ENCODE measurements at regions of chr15 and their contacts with region 1.

Region 1: GRCh38 chr15:59587068-59587826 is 24.3 kb upstream of the GCNT3 start:
- DNase-seq: peak; percentile 81
- ATAC-seq: peak; percentile 88
- H3K4me3 ChIP-seq: no peak overlapping the region
- H3K27ac ChIP-seq: peak overlapping the region; percentile 63
- H3K4me1 ChIP-seq: peaks cover 12 to 24% of the 10 kb centered on the region in 2 experiments
- H3K27me3 ChIP-seq: no peaks in the 10 kb centered on the region
- CTCF ChIP-seq: no peak
- POLR2A ChIP-seq: no peak
- RAD21 ChIP-seq: peak; percentile 9; the same call in 1 of the 2 replicates

Region 2: DNA sequence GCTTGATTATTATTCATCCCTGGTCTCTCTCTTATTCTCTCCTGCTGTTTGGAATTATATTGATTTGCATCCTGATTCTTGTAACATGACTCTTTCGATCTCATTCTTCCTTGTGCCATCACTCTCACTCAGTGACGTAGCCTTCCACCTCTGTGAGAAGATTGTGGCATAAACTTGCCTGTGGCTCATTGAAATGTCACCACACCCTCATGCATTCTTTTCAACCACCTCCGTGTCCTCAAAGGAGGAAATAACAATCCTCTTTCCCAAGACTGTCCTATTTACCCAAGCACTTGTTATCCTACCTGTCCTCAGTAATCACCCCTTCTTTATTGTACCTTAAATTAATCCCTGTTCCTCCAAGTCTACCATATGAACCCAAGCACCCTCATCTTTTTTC is 16.9 kb before region 1 on chr15:
- CTCF ChIA-PET with region 1: no interaction called
- POLR2A ChIA-PET with region 1: no interaction called
- RAD21 ChIA-PET with region 1: interaction called in 1 of 2 experiments, 4 read pairs
- intact Hi-C with region 1: loop called (anchors 1 kb)
- DNase-seq: peak; percentile 45
- ATAC-seq: no peak
- H3K4me3 ChIP-seq: no peak overlapping the region
- H3K27ac ChIP-seq: no peak overlapping the region
- H3K4me1 ChIP-seq: peaks cover 5 to 9% of the 10 kb centered on the region in 2 experiments; a peak in 3 of 4 replicates
- H3K27me3 ChIP-seq: no peaks in the 10 kb centered on the region
- CTCF ChIP-seq: no peak
- POLR2A ChIP-seq: no peak
- RAD21 ChIP-seq: 0 out of 2 replicates have a peak, but pooled peaks have one; percentile 3

Measured in HCT116 (cell line).